Heart left ventricle (tissue), 16 donors: ENCODE measurements at regions of chr2 and their contacts with region 1.

Region 1: GRCh38 chr2:46984642-46985476 is 69.3 kb upstream of the MCFD2 start:
- DNase-seq: peak in 4 of 5 donors; percentile 50 to 77 (median 65)
- ATAC-seq: peak; percentile 10 to 67 (median 54)
- H3K4me3 ChIP-seq: no peak overlapping the region
- H3K27ac ChIP-seq: peak overlapping the region in 11 of 12 donors; percentile 4 to 88 (median 71)
- H3K4me1 ChIP-seq: peaks cover 10 to 82% (median 69%) of the 10 kb centered on the region in 12 donors
- H3K27me3 ChIP-seq: no peaks in the 10 kb centered on the region
- CTCF ChIP-seq: no peak
- POLR2A ChIP-seq: no peak

Region 2: DNA sequence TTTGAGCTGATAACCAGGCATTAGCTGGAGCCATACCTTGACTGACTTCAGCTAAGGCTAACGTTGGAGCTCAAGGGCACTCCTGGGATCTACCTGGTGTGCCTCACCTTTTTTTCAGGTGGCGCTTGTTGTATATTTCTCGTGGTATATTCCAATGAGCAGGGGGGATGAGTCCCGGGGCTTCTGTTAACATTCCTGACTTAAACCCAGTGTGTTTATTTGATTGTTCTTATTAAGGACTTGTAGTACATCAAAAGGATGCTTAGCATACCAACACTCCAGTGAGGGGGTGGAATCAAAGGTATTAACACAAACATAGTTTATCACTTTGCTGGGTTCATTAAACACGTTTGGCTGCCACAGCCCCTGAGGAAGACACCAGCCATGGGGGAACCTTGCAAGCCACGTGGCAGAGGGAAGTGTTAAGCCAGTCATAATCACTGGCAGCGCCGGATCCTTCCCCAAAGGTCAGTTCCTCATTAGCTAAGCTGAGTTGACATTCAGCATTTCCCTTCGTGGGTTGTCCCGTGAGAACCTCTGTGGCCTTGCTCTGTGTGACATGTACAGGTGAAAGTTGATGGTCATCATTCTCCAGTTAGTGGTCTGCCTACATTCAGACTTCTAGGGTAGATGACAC is 50.2 kb after region 1 on chr2:
- intact Hi-C with region 1: loop called in 1 of 10 experiments (anchors 2 kb)
- DNase-seq: peak in 4 of 5 donors; percentile 59 to 77 (median 71)
- ATAC-seq: peak in 3 of 4 donors; percentile 8 to 20 (median 15)
- H3K4me3 ChIP-seq: no peak overlapping the region
- H3K27ac ChIP-seq: peak overlapping the region; percentile 72 to 98 (median 94)
- H3K4me1 ChIP-seq: peaks cover 17 to 88% (median 59%) of the 10 kb centered on the region in 12 donors
- H3K27me3 ChIP-seq: no peaks in the 10 kb centered on the region
- CTCF ChIP-seq: no peak
- POLR2A ChIP-seq: no peak

Region 3: GRCh38 chr2:47094511-47095142 is 109.8 kb after region 1 on chr2:
- intact Hi-C with region 1: no loop called
- DNase-seq: peak in 1 of 5 donors; percentile 14
- ATAC-seq: no peak
- H3K4me3 ChIP-seq: no peak overlapping the region
- H3K27ac ChIP-seq: no peak overlapping the region
- H3K4me1 ChIP-seq: peaks cover 0 to 20% (median under 1%) of the 10 kb centered on the region in 12 donors
- H3K27me3 ChIP-seq: no peaks in the 10 kb centered on the region
- CTCF ChIP-seq: no peak
- POLR2A ChIP-seq: no peak

Region 4: DNA sequence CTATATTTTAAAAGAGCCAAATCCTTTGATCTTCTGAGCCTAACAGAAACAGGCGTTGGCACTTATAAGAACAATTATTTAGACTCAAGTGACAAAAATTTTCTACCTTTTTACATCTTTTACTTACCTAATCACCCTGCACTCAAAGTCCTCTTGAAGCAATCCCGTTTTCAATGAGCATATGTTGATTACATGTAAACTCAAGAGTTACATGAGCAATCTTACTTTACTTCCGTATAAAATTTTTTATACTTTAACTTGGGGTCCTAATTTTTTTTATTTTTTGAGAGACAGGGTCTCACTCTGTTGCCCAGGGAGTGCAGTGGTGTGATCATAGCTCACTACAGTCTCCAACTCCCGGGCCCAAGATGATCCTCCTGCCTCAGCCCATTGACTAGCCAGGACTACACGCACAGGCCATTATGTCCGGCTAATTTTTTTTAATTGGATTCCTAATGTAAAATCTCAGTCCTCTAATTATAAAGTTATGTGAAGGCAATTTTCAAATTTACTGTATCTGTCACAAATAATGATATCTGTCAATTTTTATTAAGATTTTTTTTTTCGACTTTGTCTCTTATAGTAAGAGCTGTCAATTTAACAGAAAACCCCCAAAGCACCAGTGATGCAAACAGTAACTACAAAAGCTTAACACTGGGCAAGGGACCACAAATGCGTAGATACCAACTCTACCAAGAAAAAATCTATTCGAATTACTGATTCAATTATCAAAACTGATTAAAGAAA is 189.3 kb after region 1 on chr2:
- intact Hi-C with region 1: loop called in 1 of 10 experiments (anchors 1 kb)
- DNase-seq: no peak
- ATAC-seq: no peak
- H3K4me3 ChIP-seq: peak overlapping the region; percentile 70 to 99 (median 94)
- H3K27ac ChIP-seq: peak overlapping the region in 10 of 12 donors; percentile 3 to 100 (median 98)
- H3K4me1 ChIP-seq: peaks cover 10 to 64% (median 53%) of the 10 kb centered on the region in 12 donors
- H3K27me3 ChIP-seq: no peaks in the 10 kb centered on the region
- CTCF ChIP-seq: no peak
- POLR2A ChIP-seq: no peak